WTC11 (cell line): ENCODE measurements at regions of chr13 and their contacts with region 1.

Region 1: GRCh38 chr13:112443995-112444860 is 68.1 kb downstream of the SPACA7 start:
- DNase-seq: peak; percentile 94
- ATAC-seq: peak; percentile 95
- H3K4me3 Mint-ChIP-seq: no peak overlapping the region
- H3K27ac Mint-ChIP-seq: no peak overlapping the region
- H3K4me1 Mint-ChIP-seq: peaks cover 10% of the 10 kb centered on the region
- H3K27me3 Mint-ChIP-seq: peaks cover 14% of the 10 kb centered on the region
- CTCF ChIP-seq: peak; percentile 93

Region 2: DNA sequence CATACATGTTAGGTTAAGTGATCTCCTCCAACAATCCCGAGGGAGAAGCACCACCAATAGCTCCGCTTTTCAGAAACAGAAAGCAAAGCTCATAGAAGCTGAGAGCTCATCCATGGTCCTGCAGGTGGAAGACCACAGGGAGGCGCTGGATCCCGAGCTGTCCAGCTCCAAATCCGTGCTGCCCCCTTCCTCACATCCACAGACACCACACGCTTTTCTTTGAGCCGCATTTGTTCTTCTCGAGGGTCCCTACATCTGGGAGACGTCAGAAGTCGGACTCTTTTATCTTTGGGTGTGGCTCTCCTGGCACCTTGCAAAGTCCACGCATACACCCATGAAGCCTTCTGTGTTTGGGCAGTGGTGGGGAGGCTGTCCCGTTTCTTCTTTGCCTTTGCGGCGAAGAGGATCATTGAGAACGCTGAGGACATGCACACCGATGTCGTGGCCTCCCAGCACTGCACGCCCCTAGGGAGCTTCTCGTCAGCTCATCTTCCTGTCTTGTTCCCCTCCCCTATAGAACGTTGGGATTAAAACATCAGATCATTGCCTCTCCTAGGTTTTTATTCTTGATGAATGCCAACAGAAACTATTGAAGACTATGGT is 939.0 kb before region 1 on chr13:
- CTCF ChIA-PET with region 1: interaction called, 17 read pairs
- POLR2A ChIA-PET with region 1: no interaction called
- DNase-seq: peak; percentile 79
- ATAC-seq: peak; percentile 99
- H3K4me3 Mint-ChIP-seq: no peak overlapping the region
- H3K27ac Mint-ChIP-seq: no peak overlapping the region
- H3K4me1 Mint-ChIP-seq: 0 out of 2 replicates have a peak, but pooled peaks cover 7% of the 10 kb centered on the region
- H3K27me3 Mint-ChIP-seq: peaks cover 14% of the 10 kb centered on the region
- CTCF ChIP-seq: 0 out of 2 replicates have a peak, but pooled peaks have one; percentile 26

Region 3: GRCh38 chr13:112066624-112067004 is 377.6 kb before region 1 on chr13:
- CTCF ChIA-PET with region 1: interaction called, 63 read pairs
- POLR2A ChIA-PET with region 1: no interaction called
- DNase-seq: peak; percentile 83
- ATAC-seq: peak; percentile 50
- H3K4me3 Mint-ChIP-seq: no peak overlapping the region
- H3K27ac Mint-ChIP-seq: no peak overlapping the region
- H3K4me1 Mint-ChIP-seq: peaks cover 54% of the 10 kb centered on the region
- H3K27me3 Mint-ChIP-seq: peaks cover 87% of the 10 kb centered on the region
- CTCF ChIP-seq: no peak

Region 4: GRCh38 chr13:112079696-112080095 is 364.5 kb before region 1 on chr13:
- CTCF ChIA-PET with region 1: interaction called, 13 read pairs
- POLR2A ChIA-PET with region 1: no interaction called
- DNase-seq: peak; percentile 40
- ATAC-seq: peak; percentile 22
- H3K4me3 Mint-ChIP-seq: no peak overlapping the region
- H3K27ac Mint-ChIP-seq: peak overlapping the region; percentile 75; the same call in 1 of the 2 replicates
- H3K4me1 Mint-ChIP-seq: peaks cover 13% of the 10 kb centered on the region
- H3K27me3 Mint-ChIP-seq: peaks cover 31% of the 10 kb centered on the region
- CTCF ChIP-seq: no peak

Region 5: DNA sequence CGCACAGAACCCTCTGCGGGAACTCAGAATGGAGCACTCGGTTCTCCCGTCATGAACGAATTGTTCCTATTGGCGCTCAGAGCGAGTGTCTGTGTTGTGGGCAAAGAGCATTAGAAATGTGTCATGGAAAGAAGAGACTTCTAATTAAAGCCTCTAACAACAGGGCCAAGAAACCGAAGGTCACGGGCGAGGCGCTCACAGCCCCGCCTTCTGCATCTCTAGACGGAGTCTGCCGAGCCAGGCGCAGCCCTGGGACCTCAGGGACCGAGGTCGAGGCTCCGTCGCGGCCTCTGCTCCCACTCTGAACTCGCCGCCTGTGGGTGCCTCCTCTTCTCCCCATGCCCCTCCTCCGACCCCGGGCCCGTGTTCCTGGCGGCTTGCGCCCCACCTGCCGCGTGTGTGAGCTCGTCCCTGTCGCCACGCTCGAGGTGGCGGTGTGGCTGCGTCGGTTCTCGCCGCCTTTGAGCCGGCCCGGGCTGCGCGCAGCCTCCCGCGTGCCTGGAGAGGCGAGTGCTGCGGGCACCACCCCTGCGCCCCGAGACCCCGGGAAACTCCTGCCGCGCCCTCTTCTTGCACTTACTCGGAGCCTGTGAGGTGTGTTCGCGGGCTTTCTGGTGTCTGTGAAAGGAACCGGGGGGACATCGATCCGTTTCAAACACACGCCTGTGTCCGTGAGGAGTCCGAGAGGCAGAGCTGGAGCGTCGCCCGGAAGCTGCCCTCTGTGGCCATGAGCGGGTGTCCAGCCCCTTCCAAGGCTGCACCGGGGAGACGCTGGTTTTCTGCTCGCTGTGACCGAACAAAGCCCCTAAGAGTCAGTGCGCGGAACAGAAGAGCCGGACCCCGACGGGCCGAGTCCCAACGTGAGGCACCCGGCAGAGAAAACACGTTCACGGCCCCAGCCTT is 113.5 kb before region 1 on chr13:
- CTCF ChIA-PET with region 1: interaction called, 12 read pairs
- POLR2A ChIA-PET with region 1: no interaction called
- DNase-seq: no peak
- ATAC-seq: peak; percentile 57
- H3K4me3 Mint-ChIP-seq: peak overlapping the region; percentile 62
- H3K27ac Mint-ChIP-seq: no peak overlapping the region
- H3K4me1 Mint-ChIP-seq: peaks cover 16% of the 10 kb centered on the region
- H3K27me3 Mint-ChIP-seq: peaks cover 59% of the 10 kb centered on the region
- CTCF ChIP-seq: no peak